ENCODE measurements at regions of chr1 and their contacts with region 1.

Region 1: DNA sequence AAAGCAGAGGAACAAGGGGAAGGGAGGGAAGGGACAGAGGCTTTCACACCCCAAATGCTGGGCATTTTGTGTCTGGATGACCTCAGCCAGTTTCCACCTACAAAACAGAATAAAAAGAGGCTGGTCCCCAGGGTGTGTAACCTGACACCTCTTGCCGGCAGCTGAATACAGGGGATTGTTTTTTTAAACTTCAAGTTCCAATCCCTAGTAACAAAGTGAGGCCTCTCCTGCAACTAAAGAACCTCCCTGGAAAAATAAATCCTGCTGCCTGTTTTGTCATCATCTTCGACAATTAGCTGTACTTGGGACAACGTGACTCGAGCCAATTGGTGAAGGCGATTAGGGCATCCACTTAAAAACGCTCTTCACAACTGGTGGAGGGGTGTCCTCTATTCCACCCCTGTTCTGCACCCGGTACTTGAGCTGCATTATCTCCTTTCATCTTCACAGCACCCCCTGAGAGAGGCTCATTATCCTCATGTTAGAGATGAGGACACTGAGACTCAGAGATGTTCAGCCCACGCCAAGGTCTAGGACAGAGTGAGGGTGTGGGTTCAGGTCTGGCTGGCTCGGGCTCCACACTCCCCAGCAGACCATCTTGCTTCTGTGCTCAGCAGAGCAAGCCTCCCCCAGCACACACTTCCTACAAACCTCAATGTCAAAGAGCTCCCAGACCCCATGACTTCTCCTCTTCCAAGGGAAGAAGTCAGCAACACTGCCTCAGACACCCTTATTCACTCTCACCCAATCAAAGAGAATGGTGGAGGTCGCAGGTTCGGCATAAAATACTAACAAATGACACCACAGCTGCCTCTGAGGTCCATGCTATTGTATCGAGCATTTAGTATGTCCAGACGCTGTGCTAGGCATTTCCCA is 15.2 kb downstream of the ITPKB start:
- H3K4me3 ChIP-seq: no peak overlapping the region
- H3K27ac ChIP-seq: peak overlapping the region; percentile 70
- H3K4me1 ChIP-seq: peaks cover 39% of the 10 kb centered on the region
- CTCF ChIP-seq: no peak

Region 2: DNA sequence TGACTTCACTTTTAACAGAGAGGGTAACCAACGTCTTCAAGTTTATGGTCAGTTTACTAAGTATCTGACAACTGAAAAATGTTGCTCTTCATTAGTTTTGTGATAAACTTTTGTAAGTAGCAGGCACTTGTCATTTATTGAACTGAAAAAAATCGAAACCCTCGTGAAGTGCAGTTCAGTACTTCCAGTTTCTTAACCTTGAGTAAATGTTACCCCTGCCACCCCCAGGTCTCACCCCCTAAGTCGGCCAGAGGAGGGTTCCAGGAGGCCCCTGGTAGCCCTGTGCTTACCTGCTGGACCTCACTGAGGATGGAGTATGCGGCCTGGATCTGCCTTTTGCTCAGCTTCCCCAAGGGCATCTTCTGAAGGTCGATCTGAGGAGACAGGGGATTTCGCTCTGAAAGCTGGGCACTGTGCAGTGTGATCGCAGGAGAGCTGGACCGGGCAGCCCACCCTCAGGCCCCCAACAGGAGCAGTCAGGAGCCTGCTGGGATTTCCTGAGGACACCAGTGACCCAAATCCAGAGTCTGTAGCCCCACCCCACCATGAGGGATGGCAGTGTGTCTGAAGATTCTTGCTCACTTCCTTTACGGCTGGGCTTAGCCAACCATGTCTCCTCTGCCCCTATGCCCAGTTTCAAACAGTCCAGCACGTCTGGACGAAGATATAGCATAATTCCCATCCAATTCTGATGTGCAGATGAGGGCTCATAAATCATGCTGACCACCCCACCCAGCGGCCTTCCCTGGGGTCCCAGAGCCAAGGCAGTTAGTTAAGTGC is 353.6 kb before region 1 on chr1:
- CTCF ChIA-PET with region 1: no interaction called
- POLR2A ChIA-PET with region 1: no interaction called
- H3K4me3 ChIP-seq: no peak overlapping the region
- H3K27ac ChIP-seq: no peak overlapping the region
- H3K4me1 ChIP-seq: no peaks in the 10 kb centered on the region
- CTCF ChIP-seq: no peak

Region 3: GRCh38 chr1:226702957-226703831 is 20.7 kb before region 1 on chr1:
- CTCF ChIA-PET with region 1: interaction called, 3 read pairs
- POLR2A ChIA-PET with region 1: interaction called, 11 read pairs
- H3K4me3 ChIP-seq: peak overlapping the region; percentile 65
- H3K27ac ChIP-seq: peak overlapping the region; percentile 89
- H3K4me1 ChIP-seq: peaks cover 15% of the 10 kb centered on the region
- CTCF ChIP-seq: peak; percentile 66

Region 4: DNA sequence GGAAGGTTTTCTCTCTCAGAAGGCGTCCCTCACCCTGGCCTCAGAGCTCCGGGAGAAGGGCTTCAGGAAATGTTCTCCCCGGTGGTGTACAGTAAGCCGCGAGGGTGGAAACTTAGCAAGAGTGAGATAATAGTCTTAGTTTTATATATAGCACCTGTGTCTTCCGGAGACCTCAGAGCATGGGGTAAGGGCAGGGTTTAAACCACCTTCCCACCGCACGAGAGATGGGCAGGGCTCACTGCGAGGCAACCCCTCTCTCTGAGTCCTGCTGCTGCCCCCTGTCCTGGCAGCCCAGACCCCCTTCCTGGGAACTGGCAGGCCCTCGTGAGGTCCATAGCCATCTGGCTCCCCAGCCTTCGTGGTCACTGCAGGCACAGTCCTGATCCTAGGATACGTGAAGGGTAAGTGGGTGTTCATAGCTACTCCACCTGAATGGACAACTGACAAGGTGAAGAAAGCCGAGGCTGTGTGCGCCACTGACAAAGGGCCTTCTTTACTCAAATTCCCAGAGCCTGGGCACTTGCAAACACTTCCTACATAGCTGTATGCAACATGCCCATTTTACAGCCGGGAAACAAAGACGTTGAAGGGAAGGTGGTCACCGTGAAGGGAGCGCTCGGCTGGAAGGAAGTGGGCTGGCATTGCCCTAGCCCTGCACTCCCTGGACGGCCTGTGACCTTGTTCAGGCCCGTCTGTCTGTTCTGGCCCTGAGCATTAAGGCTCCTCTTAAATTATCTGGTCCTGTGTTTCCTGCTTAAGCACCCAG is 11.7 kb before region 1 on chr1:
- CTCF ChIA-PET with region 1: interaction called, 12 read pairs
- POLR2A ChIA-PET with region 1: no interaction called
- H3K4me3 ChIP-seq: no peak overlapping the region
- H3K27ac ChIP-seq: no peak overlapping the region
- H3K4me1 ChIP-seq: peaks cover 10% of the 10 kb centered on the region
- CTCF ChIP-seq: no peak

Region 5: DNA sequence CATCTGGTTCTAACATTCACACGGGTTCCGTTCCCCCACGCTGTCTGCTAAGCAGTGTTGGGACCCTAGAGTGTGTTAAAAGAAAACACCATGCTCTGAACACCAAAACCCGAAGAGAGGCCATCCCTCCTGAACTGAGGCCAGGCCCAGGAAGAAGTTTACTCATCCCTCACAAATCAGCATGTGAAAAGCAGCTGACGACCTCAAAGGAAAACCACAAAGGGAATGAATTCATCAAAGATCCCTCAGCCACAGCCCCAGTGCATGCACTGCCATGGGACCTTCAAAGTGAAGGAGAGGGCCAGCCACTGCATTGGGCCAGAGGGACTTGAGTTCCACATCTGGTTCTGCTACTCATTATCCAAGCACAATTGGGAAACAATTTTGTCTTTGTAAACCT is 139.6 kb after region 1 on chr1:
- CTCF ChIA-PET with region 1: no interaction called
- POLR2A ChIA-PET with region 1: no interaction called
- H3K4me3 ChIP-seq: no peak overlapping the region
- H3K27ac ChIP-seq: no peak overlapping the region
- H3K4me1 ChIP-seq: no peaks in the 10 kb centered on the region
- CTCF ChIP-seq: no peak

Measured in HEK293 (cell line).